Body of pancreas (tissue), 4 donors: ENCODE measurements at regions of chr2 and their contacts with region 1.

Region 1: DNA sequence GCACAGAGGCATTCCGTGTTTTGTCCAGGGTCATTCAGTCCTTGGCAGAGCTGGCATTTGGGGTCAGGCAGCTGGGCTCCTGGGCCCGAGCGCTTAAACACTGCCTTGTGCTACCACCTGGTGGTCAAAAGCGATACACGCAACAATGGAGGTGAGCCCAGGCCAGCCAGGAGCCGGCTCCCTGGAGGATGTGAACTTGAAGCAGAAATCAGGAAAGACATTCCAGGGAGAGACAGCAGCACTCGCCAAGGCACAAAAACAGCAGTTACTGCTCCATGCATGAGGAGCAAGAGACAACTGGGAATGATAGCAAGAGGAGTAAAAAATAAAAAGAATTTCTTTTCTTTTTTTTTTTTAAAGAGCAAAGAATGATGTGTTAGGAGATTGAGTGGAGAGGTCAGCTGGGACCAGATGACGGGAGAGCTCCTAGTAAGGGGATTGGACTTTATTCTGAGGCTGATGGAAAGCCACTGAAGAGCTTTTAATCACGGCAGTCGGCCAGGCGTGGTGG is 20.7 kb downstream of the SCYGR8 start:
- DNase-seq: peak; percentile 81 to 89 (median 86)
- ATAC-seq: peak; percentile 89
- H3K4me3 ChIP-seq: no peak overlapping the region
- H3K27ac ChIP-seq: peak overlapping the region in 3 of 4 donors; percentile 34 to 60 (median 50)
- H3K4me1 ChIP-seq: peaks cover 29% of the 10 kb centered on the region
- H3K27me3 ChIP-seq: no peaks in the 10 kb centered on the region
- CTCF ChIP-seq: peak; percentile 66 to 95 (median 89)
- POLR2A ChIP-seq: no peak

Region 2: DNA sequence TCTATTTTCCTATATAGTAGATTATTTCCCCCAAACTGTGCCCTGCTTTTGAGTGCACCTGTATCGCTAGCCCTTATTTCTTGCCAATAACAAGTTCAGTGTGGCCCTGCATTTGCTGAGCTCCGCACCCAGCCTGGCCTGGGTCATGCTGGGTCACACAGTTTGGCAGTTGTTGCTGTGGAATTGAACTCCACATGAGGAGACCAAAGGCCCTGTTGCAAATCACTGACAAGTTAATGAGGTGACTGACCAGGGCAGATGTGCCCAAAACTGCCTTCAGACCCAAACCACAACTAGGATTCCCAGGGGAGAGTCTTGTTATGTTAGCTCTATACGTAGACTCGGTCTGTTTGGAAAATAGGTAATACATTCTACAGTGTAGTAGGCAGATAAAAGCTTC is 633.4 kb before region 1 on chr2:
- intact Hi-C with region 1: loop called (anchors 10 kb)
- DNase-seq: no peak
- ATAC-seq: no peak
- H3K4me3 ChIP-seq: no peak overlapping the region
- H3K27ac ChIP-seq: no peak overlapping the region
- H3K4me1 ChIP-seq: no peaks in the 10 kb centered on the region
- H3K27me3 ChIP-seq: no peaks in the 10 kb centered on the region
- CTCF ChIP-seq: no peak
- POLR2A ChIP-seq: no peak

Region 3: GRCh38 chr2:227324995-227325838 is 441.2 kb before region 1 on chr2 and contains the start of gene MFF:
- intact Hi-C with region 1: no loop called
- DNase-seq: peak; percentile 93 to 95 (median 94)
- ATAC-seq: peak; percentile 100
- H3K4me3 ChIP-seq: peak within 1 kb of the TSS; percentile 93 to 99
- H3K27ac ChIP-seq: peak within 1 kb of the TSS; percentile 83 to 97 (median 93)
- H3K4me1 ChIP-seq: peaks cover 17% of the 10 kb centered on the region
- H3K27me3 ChIP-seq: no peaks in the 10 kb centered on the region
- CTCF ChIP-seq: peak in 5 of 7 experiments; percentile 15 to 40 (median 31)
- POLR2A ChIP-seq: peak; percentile 78 to 90 (median 89)
- total RNA-seq, gene MFF: 86.9 to 141 TPM

Region 4: GRCh38 chr2:227404585-227405271 is 361.7 kb before region 1 on chr2:
- intact Hi-C with region 1: loop called (anchors 5 kb)
- DNase-seq: no peak
- ATAC-seq: no peak
- H3K4me3 ChIP-seq: no peak overlapping the region
- H3K27ac ChIP-seq: no peak overlapping the region
- H3K4me1 ChIP-seq: peaks cover 10% of the 10 kb centered on the region
- H3K27me3 ChIP-seq: no peaks in the 10 kb centered on the region
- CTCF ChIP-seq: no peak
- POLR2A ChIP-seq: no peak